ENCODE measurements at regions of chr19 and their contacts with region 1.

Region 1: DNA sequence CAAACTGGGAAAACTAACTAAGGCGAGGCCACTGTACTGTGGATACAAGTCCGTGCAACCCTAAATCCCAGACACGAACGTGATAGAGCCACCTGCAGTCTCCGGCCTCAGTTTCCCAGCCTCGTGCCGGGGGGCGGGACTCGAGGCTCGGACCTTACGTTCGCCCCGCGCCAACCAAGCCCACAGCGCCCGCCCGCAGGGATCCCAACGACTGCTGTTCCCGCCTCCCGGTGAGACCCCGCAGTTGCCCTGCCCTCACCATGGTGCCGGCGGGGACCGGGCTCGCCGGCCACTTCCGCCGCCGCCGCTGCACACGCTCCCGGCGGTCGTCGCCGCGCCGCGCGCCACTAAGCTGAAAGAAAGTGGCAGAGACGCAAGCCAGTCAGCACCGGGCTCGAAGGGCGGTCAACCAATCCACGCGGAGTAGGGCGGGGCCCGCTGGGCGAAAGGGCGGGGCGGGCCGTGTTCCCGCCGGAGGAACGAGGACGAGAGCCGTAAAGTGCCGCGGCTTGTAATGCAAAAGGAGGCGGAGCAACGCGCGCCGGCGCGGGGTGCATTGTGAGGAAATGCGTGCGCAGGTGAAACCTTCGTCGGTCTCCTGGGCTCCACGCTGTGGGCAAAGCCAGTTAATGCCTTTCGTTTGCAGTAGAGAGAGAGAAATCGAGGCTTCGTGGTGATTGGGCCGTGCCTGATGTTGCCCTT is at the start of gene LSM4:
- DNase-seq: peak; percentile 99
- H3K4me3 ChIP-seq: peak within 1 kb of the TSS; percentile 73
- H3K27ac ChIP-seq: peak within 1 kb of the TSS; percentile 89
- H3K4me1 ChIP-seq: peaks cover 42% of the 10 kb centered on the region
- H3K27me3 ChIP-seq: no peaks in the 10 kb centered on the region
- CTCF ChIP-seq: no peak
- total RNA-seq, gene LSM4: 128 to 308 TPM

Region 2: DNA sequence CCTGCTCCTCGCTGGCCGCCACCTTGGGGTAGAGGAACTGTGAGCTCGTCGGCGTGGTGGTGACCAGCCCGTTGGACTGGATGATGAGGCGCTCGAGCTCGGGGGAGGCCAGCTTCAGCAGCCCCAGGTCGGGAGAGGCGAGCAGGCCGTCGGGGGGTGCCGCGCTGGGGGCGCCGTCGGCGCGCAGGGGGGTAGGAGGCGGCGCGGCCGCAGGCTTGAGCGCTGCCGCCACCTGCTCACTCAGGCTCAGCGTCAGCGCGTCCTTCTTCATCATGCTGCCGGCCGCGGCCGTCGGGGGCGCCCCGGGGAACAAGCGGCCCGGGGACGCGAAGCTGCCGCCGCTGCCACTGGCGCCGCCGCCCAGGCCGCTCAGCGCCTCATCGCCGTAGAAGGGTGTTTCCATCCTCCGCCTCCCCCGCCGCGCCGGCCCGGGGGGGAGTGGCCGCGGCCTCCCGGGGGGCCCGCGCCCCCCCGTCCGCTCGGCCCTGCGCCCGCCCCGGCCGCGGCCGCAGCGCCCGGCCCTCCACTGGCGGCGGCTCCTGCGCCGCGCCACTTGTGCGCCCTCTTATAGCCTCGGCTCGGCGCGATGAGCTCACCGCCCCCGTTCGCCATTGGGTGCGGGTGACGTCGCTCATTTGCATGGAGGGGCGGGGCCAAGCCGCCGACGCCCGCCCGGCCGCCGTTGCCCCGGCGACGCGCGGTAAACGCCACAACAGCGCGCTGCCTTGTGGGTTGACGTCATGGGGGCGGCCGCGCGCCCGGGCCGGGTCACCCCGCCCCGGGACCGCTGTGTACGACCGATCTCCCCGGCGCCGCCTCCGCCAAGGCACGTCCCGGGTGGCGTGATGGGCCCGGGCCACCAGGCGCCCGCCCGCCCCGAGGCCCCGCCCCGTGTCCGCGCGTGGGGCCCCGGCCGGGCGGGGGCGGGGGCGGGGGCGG is 41.6 kb before region 1 on chr19 and contains the start of gene JUND:
- intact Hi-C with region 1: loop called (anchors 2 kb)
- DNase-seq: peak; percentile 96
- H3K4me3 ChIP-seq: peak within 1 kb of the TSS; percentile 83
- H3K27ac ChIP-seq: peak within 1 kb of the TSS; percentile 100
- H3K4me1 ChIP-seq: peaks cover 17% of the 10 kb centered on the region
- H3K27me3 ChIP-seq: no peaks in the 10 kb centered on the region
- CTCF ChIP-seq: no peak
- total RNA-seq, gene JUND: 177 to 418 TPM

Region 3: GRCh38 chr19:18304458-18305310 is 18.2 kb before region 1 on chr19:
- intact Hi-C with region 1: no loop called
- DNase-seq: peak; percentile 67
- H3K4me3 ChIP-seq: peak overlapping the region; percentile 11
- H3K27ac ChIP-seq: peak overlapping the region; percentile 97
- H3K4me1 ChIP-seq: peaks cover 4% of the 10 kb centered on the region
- H3K27me3 ChIP-seq: no peaks in the 10 kb centered on the region
- CTCF ChIP-seq: no peak

Region 4: DNA sequence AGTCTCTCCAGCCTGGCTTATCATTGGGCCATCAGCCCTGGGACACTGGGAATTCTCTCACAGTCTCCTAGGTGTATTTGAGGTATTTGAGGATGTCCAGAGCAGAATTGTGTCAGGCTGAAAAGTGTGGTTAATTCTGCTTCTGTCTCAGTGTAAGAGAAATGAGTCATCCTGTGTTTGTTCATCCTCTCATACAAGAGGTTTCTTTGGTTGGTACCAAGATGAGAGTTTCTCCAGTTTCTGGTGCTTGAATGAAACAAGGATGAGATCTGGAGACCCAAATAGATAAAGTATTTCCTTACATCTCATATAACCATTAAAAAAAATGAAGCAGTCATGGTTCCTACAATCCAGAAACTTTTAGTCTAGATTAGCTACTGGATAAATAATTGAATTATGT is 1550.5 kb after region 1 on chr19:
- intact Hi-C with region 1: no loop called
- DNase-seq: no peak
- H3K4me3 ChIP-seq: no peak overlapping the region
- H3K27ac ChIP-seq: no peak overlapping the region
- H3K4me1 ChIP-seq: no peaks in the 10 kb centered on the region
- H3K27me3 ChIP-seq: no peaks in the 10 kb centered on the region
- CTCF ChIP-seq: no peak

Measured in colonic mucosa (tissue), 4 donors.